Motor neuron (in vitro differentiated cells): ENCODE measurements at regions of chr12 and their contacts with region 1.

Region 1: DNA sequence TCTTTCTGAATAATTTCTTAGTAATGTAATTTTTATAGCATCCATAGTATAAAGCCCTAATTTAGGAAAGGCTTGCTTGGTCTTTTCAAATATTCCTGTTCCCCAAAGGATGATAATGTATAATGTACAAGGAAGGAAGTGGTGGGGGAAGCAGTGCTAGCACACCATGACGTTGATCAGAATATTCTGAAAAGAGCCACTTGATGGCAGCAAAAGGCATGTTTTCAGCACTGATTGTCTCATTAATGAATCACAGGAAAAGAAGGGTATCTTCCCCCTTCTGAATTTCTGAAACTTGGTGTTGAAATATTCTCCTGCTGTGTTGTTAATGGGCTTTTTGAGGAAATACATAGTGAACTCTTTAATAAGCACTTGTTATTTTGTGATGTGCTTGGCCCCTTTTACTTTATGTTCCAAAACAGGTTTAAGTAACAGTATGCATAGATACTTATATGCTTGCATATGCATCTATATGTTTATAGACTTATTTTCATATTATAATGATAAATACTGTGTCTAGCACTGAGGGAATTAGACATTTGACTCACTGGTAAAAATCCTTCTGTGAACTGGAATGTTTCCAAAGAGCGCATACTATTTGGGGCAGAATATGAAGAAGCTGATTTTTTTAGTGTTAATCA is 122.0 kb downstream of the TMEM117 start:
- ATAC-seq: peak in 7 of 8 experiments; percentile 51 to 99 (median 71)
- H3K4me3 ChIP-seq: no peak overlapping the region
- H3K27ac ChIP-seq: no peak overlapping the region
- H3K4me1 ChIP-seq: no peaks in the 10 kb centered on the region

Region 2: DNA sequence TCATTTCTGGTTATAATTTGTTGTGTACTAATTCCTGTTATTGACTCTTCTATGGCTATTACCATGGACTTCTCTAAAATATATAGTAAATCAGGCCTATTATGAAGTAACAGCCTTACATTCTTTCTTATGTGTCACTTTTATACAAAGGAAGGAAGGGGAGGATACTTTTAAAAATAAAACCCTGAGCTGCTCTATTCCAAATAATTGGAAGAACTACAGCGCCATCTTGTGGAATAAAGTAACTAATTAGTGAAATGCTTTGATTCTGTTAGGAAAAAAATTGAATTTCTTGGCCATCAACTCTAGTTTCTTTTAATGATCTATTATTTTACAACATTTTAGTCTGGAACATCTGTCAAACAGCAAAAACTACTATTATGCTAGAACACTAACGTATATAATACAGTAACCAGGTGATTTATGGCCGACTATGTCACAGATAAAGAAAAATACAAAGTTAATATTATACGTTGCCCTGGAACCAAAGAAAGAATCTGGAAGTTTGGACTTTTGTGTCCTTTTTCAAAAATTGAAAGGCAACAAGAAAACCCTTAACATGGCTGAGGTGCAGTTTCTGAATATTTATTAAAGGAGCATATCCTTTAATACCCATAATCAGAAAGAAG is 973.2 kb after region 1 on chr12:
- in situ Hi-C with region 1: loop called in 3 of 9 experiments (anchors 25 kb)
- ATAC-seq: peak in 7 of 8 experiments; percentile 33 to 70 (median 58)
- H3K4me3 ChIP-seq: no peak overlapping the region
- H3K27ac ChIP-seq: no peak overlapping the region
- H3K4me1 ChIP-seq: no peaks in the 10 kb centered on the region